Activated CD4-positive, alpha-beta T cell treated with anti-CD3 and anti-CD28 coated beads for 36 hours (primary cell): ENCODE measurements at regions of chrX and their contacts with region 1.

Region 1: DNA sequence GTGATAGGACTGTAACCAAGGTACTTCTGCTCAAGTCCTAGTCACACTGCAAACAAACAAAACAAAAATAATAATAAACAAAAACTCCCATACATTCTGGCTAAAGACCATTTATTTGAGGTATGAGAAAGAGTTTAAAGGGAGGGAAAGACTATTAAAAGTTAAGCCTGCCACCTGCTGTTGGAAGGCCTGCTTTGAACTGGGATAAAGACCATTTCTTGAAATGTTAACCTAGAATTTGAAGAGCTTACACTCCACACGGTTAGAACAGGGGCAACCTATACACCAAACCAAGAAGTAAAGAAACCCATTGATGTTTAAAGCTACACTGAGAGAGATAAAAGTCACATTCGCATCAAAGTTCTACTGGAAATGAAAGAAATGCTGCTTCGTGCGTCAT is 548.7 kb upstream of the DIPK2B start:
- DNase-seq: no peak
- ATAC-seq: no peak
- H3K4me3 Mint-ChIP-seq: no peak overlapping the region
- H3K27ac Mint-ChIP-seq: peak overlapping the region; percentile 79
- H3K4me1 Mint-ChIP-seq: peaks cover 21% of the 10 kb centered on the region
- H3K27me3 Mint-ChIP-seq: no peaks in the 10 kb centered on the region

Region 2: DNA sequence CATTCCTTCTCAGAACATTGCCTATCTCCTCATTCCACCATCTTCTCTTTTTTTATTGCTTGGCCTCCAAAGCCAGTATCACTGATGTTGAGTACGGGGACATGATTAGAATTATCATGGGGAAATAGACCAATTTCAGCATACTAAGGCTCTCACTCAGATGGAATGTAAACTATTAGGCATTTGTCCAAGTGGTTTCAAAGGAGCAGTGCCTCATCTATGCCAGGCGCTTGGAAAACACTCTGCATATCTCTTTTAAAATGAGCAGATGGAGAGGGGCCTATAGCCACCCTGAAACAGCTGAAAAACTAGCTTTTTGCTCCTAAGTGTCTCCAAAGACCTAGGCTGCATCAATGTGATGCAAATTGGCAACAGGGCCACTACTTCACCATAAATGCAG is 397.9 kb before region 1 on chrX:
- CTCF ChIA-PET with region 1: no interaction called
- POLR2A ChIA-PET with region 1: no interaction called
- intact Hi-C with region 1: no loop called
- DNase-seq: no peak
- ATAC-seq: no peak
- H3K4me3 Mint-ChIP-seq: no peak overlapping the region
- H3K27ac Mint-ChIP-seq: no peak overlapping the region
- H3K4me1 Mint-ChIP-seq: no peaks in the 10 kb centered on the region
- H3K27me3 Mint-ChIP-seq: no peaks in the 10 kb centered on the region

Region 3: DNA sequence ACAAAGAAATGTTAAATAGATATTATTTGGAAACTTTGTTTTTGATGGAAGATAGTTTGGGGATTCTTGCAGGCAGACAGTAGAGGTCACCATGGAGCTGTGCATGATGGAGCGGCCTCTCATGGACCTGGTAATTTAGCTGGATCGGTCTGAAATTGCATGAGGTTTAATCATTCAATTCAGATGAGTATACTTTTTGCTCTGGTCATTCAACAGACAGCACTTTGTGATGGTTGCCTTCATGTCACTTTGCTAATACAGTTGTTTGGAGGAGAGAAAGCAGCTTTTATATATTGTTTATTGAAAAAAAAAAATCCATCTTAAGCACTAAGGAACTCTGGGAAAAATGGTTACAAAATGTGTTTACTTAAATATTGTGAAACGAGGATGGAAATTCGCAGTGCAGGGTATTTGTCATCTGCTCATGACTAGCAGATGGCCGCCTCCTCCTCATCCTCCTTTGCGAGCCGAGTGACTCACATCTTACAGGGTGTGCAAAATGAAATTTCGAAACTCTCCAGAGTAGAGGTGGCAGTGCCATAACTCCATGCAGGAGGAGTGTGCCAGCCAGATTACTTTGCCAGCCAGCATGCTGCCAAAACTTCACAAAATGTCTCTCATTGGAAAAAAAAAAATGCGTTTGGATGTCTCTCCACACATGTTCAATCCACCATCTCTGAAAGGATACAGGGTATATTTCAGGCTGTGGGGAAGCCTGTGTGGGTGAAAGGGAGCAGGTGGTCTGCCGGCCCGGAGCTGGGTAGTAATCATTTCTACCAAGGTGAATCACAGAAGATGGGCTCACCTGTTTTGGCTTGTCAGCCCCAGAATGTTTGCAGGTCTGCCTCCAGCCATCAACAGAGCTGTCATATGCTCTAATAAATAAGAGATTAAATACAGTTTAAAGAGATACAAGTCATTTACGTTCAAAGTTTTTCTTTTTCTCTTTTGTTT is 233.8 kb before region 1 on chrX:
- CTCF ChIA-PET with region 1: no interaction called
- POLR2A ChIA-PET with region 1: no interaction called
- intact Hi-C with region 1: loop called in 1 of 2 experiments (anchors 5 kb)
- DNase-seq: peak; percentile 59
- ATAC-seq: peak; percentile 92
- H3K4me3 Mint-ChIP-seq: peak overlapping the region; percentile 43
- H3K27ac Mint-ChIP-seq: peak overlapping the region; percentile 39
- H3K4me1 Mint-ChIP-seq: peaks cover 23% of the 10 kb centered on the region
- H3K27me3 Mint-ChIP-seq: no peaks in the 10 kb centered on the region

Region 4: GRCh38 chrX:45735571-45735970 is 13.8 kb before region 1 on chrX:
- CTCF ChIA-PET with region 1: no interaction called
- POLR2A ChIA-PET with region 1: no interaction called
- intact Hi-C with region 1: no loop called
- DNase-seq: no peak
- ATAC-seq: no peak
- H3K4me3 Mint-ChIP-seq: no peak overlapping the region
- H3K27ac Mint-ChIP-seq: no peak overlapping the region
- H3K4me1 Mint-ChIP-seq: peaks cover 5% of the 10 kb centered on the region
- H3K27me3 Mint-ChIP-seq: peaks cover 3% of the 10 kb centered on the region

Region 5: GRCh38 chrX:45815441-45815840 is 66.1 kb after region 1 on chrX:
- CTCF ChIA-PET with region 1: no interaction called
- POLR2A ChIA-PET with region 1: no interaction called
- intact Hi-C with region 1: no loop called
- DNase-seq: no peak
- ATAC-seq: peak; percentile 54
- H3K4me3 Mint-ChIP-seq: no peak overlapping the region
- H3K27ac Mint-ChIP-seq: peak overlapping the region; percentile 74
- H3K4me1 Mint-ChIP-seq: peaks cover 67% of the 10 kb centered on the region
- H3K27me3 Mint-ChIP-seq: no peaks in the 10 kb centered on the region

Region 6: GRCh38 chrX:46506076-46506475 is 756.7 kb after region 1 on chrX:
- CTCF ChIA-PET with region 1: no interaction called
- POLR2A ChIA-PET with region 1: no interaction called
- intact Hi-C with region 1: no loop called
- DNase-seq: no peak
- ATAC-seq: no peak
- H3K4me3 Mint-ChIP-seq: no peak overlapping the region
- H3K27ac Mint-ChIP-seq: no peak overlapping the region
- H3K4me1 Mint-ChIP-seq: no peaks in the 10 kb centered on the region
- H3K27me3 Mint-ChIP-seq: no peaks in the 10 kb centered on the region